ENCODE measurements at regions of chr3 and their contacts with region 1.

Region 1: DNA sequence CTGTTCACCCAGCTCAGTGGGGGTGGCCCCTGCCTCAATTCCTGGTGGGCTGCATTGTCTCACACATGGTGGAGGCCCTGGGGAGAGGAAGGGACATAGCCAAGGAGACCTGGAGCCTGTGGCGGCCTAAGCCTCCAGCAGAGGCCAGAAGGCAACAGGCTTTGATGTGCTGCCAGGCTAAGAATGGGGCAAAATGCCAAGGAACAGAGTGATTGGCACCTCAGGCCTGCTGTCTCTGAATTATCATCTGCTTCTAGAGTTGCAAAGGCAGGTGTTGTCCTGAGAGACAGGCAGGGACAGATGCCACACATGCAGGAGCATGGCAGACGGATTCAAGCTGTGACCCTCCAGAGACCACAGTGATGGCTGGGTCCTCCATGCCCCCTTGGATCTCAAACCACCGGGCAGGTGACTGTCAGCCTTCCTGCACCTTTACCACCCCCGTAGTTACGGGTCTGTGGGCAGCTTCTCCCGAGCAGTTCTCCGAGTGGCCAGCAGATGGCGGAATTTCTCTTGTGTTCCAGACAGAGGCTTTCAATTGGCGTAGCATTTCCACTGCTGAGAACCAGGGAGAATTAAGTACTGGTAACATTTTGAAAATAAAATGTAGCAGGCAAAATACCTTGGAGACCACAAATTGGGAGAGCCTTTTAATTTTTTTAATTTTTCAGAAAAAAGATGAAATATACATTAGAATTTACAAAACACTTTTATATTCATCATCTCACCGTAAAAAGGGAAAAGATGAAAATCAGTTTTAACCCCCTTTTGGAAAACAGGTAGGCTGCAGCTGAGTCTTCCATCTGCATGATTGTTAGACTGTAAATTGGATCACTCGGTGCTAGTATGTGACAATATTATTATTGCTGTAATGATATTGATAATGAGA is 525.5 kb upstream of the CFAP20DC start:
- DNase-seq: peak; percentile 60 to 89 (median 80)
- ATAC-seq: peak; percentile 69 to 88 (median 78)
- H3K4me3 ChIP-seq: no peak overlapping the region
- H3K4me3 Mint-ChIP-seq: no peak overlapping the region
- H3K27ac ChIP-seq: no peak overlapping the region
- H3K27ac Mint-ChIP-seq: no peak overlapping the region
- H3K4me1 ChIP-seq: peaks cover 2 to 7% of the 10 kb centered on the region in 2 experiments
- H3K4me1 Mint-ChIP-seq: peaks cover 0 to 11% (median 3%) of the 10 kb centered on the region in 3 donors
- H3K27me3 ChIP-seq: no peaks in the 10 kb centered on the region
- H3K27me3 Mint-ChIP-seq: peaks cover 2 to 3% of the 10 kb centered on the region in 2 donors

Region 2: GRCh38 chr3:59545374-59545773 is 30.0 kb before region 1 on chr3:
- CTCF ChIA-PET with region 1: no interaction called
- POLR2A ChIA-PET with region 1: no interaction called
- DNase-seq: no peak
- ATAC-seq: no peak
- H3K4me3 ChIP-seq: no peak overlapping the region
- H3K4me3 Mint-ChIP-seq: no peak overlapping the region
- H3K27ac ChIP-seq: no peak overlapping the region
- H3K27ac Mint-ChIP-seq: no peak overlapping the region
- H3K4me1 ChIP-seq: peaks cover 4 to 10% of the 10 kb centered on the region in 2 experiments
- H3K4me1 Mint-ChIP-seq: peaks cover 11 to 14% (median 12%) of the 10 kb centered on the region in 3 donors
- H3K27me3 ChIP-seq: no peaks in the 10 kb centered on the region
- H3K27me3 Mint-ChIP-seq: peaks cover 0 to 3% of the 10 kb centered on the region in 2 donors

Region 3: GRCh38 chr3:59809710-59810444 is 234.5 kb after region 1 on chr3:
- CTCF ChIA-PET with region 1: interaction called in 1 of 2 experiments, 17 read pairs
- POLR2A ChIA-PET with region 1: no interaction called
- DNase-seq: peak in 1 of 35 experiments; percentile 28
- ATAC-seq: peak in 1 of 4 experiments; percentile 26
- H3K4me3 ChIP-seq: no peak overlapping the region
- H3K4me3 Mint-ChIP-seq: no peak overlapping the region
- H3K27ac ChIP-seq: no peak overlapping the region
- H3K27ac Mint-ChIP-seq: peak overlapping the region in 1 of 2 donors; percentile 33
- H3K4me1 ChIP-seq: peaks cover 2 to 6% of the 10 kb centered on the region in 2 experiments
- H3K4me1 Mint-ChIP-seq: peaks cover 6 to 21% (median 17%) of the 10 kb centered on the region in 3 donors
- H3K27me3 ChIP-seq: no peaks in the 10 kb centered on the region
- H3K27me3 Mint-ChIP-seq: no peaks in the 10 kb centered on the region

Region 4: DNA sequence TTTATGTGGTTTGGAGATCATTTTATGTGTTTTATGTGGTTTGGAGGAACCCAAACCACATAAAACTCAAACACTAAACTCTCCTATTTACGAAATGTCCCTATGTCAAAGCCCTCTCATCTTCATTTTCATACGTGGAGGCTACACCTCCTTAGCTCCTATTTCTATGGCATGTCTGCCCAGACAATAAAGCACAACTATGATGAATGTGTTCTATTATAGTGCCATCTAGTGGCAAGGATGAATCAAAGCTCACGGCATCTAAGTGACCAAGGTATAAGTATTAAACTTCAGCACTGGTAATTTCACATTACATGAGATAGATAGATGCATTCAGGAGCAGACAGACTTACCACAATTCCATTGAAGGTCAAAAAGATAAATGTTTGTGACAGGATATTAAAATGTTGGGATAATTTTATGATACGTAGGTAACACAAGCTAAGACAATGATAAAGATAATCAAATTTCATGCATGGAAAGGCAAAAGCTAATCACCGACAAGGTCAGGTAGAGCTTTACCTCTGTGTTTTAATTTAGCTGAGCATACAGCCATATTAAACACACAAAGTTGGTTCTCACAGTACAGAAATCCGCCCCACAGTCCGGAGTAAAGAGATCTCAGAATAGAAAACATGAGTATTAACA is 1806.5 kb after region 1 on chr3:
- CTCF ChIA-PET with region 1: interaction called in 1 of 2 experiments, 10 read pairs
- POLR2A ChIA-PET with region 1: no interaction called
- DNase-seq: peak in 2 of 35 experiments; percentile 6 to 52
- ATAC-seq: peak in 3 of 4 experiments; percentile 34 to 58 (median 41)
- H3K4me3 ChIP-seq: no peak overlapping the region
- H3K4me3 Mint-ChIP-seq: no peak overlapping the region
- H3K27ac ChIP-seq: no peak overlapping the region
- H3K27ac Mint-ChIP-seq: no peak overlapping the region
- H3K4me1 ChIP-seq: no peaks in the 10 kb centered on the region
- H3K4me1 Mint-ChIP-seq: peaks cover 2 to 6% (median 2%) of the 10 kb centered on the region in 3 donors
- H3K27me3 ChIP-seq: no peaks in the 10 kb centered on the region
- H3K27me3 Mint-ChIP-seq: peaks cover 20 to 23% of the 10 kb centered on the region in 2 donors